ENCODE measurements at regions of chr19 and their contacts with region 1.

Region 1: DNA sequence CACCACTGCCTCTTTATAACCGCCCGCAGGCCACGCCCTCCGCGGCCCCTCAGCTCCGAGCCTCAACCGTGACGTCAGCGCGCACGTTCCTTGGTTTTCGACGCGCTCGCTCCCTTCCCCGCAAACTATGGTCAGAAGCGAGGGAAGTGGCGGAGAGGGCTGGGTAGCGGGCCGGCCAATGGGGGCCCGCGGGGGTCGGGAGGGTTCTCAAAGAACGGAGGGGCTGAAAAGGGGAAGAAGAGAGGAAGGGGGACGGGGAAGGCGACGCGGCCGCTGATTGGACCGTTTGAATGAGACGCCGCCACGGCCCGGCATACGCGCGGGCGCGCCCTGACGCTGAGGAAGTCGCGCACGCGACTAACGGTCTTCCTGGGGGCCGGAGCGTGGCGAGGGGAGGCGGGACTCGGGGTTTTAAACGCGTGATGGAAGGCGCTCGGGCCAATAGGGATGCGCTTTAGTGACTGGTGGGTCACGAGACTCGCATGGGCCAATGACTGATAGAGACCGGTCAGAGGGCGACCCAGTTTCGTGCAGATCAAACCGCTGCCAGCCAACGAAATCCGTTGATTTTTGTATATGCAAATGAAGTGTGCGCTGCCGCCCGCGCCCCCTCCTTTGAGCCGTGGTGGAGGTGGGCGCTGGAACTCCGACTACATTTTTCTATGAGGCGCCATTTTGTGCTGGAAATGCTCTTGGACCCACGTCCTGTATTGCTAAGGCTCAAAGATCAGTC is 378 bp upstream of the UBE2S start:
- DNase-seq: peak; percentile 96
- ATAC-seq: peak; percentile 93
- H3K4me3 Mint-ChIP-seq: peak overlapping the region; percentile 95
- H3K27ac Mint-ChIP-seq: peak overlapping the region; percentile 99
- H3K4me1 Mint-ChIP-seq: peaks cover 32% of the 10 kb centered on the region
- H3K27me3 Mint-ChIP-seq: no peaks in the 10 kb centered on the region

Region 2: GRCh38 chr19:55258828-55259539 is 149.0 kb before region 1 on chr19 and contains the start of gene PPP6R1:
- POLR2A ChIA-PET with region 1: interaction called, 43 read pairs
- DNase-seq: peak; percentile 98
- ATAC-seq: peak; percentile 77
- H3K4me3 Mint-ChIP-seq: peak within 1 kb of the TSS; percentile 99
- H3K27ac Mint-ChIP-seq: peak within 1 kb of the TSS; percentile 99
- H3K4me1 Mint-ChIP-seq: peaks cover 34% of the 10 kb centered on the region
- H3K27me3 Mint-ChIP-seq: no peaks in the 10 kb centered on the region
- total RNA-seq, gene PPP6R1: 211 to 226 TPM

Region 3: DNA sequence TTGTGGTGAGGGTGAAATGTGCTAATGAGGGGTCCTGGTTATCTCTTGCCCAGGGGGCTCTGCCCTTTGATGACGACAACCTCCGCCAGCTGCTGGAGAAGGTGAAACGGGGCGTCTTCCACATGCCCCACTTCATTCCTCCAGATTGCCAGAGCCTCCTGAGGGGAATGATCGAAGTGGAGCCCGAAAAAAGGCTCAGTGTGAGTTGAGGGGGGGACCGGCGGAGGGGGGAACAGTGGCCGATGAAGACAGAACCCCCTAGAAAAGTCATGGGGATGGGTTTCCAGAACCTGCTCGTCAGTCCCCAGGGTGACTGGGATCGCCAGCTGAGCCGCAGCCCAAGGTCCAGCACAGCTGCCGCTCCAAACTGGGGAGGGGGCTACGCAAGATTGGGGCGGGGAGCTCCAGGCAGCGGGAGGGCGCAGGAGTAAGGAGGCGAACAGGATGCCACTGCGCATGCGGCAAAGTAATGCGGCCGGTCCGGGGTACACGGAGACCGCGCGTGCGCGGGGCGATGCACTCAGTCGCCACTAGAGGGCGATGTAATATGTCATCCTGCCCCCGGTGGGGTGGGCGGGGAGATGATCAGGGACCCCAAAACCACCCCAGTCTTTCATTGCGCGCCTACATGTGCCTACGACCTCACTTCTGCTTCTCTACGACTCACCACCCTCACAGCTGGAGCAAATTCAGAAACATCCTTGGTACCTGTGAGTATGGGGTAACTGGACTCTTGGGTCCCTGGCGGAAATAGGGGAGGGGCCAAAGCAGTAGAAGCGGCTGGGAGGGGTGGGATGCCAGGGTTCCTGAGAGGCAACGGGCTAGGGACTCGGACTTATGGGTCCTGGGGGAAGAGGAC is 106.3 kb before region 1 on chr19:
- POLR2A ChIA-PET with region 1: interaction called, 15 read pairs
- DNase-seq: peak; percentile 98
- ATAC-seq: peak; percentile 91
- H3K4me3 Mint-ChIP-seq: peak overlapping the region; percentile 95
- H3K27ac Mint-ChIP-seq: peak overlapping the region; percentile 98
- H3K4me1 Mint-ChIP-seq: peaks cover 8% of the 10 kb centered on the region
- H3K27me3 Mint-ChIP-seq: peaks cover 3% of the 10 kb centered on the region

Region 4: GRCh38 chr19:55385740-55386529 is 22.0 kb before region 1 on chr19 and contains the start of gene RPL28:
- POLR2A ChIA-PET with region 1: interaction called, 211 read pairs
- DNase-seq: peak; percentile 96
- ATAC-seq: peak; percentile 74
- H3K4me3 Mint-ChIP-seq: peak within 1 kb of the TSS; percentile 100
- H3K27ac Mint-ChIP-seq: peak within 1 kb of the TSS; percentile 99
- H3K4me1 Mint-ChIP-seq: peaks cover 53% of the 10 kb centered on the region
- H3K27me3 Mint-ChIP-seq: no peaks in the 10 kb centered on the region
- total RNA-seq, gene RPL28: 3,030 to 3,043 TPM

Region 5: DNA sequence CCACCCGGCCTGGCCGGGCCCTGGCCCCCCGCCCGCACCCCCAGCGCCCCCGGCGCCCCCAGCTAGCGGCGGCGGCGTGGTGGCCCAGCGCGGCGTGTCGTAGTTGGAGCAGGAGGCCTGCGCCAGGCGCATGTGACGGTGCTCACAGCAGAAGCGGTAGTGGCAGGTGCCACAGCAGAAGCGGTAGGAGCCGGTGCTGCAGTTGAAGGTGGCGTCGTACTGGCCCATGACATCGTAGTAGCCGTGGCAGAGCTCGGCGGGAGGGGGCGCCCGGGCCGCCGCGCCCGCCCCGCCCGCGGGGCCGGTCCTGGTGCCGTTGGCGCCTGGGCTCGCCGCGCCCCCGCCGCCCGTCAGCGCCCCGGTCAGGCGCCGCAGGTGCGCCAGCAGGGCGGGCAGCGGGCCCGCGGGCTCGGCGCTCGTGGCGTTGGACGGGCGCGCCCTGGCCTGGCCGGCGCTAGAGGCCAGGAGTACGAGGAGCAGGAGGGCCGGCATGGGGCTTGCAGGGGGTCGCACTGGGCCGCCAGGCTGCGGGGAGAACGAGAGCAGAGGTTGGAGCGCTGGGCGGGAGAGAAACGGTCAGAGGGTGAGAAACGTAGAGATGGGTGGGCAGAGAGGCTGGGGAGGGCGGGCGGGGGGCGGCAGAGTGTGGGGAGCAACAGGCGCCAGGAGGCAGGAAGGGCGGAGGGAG is 34.5 kb after region 1 on chr19:
- POLR2A ChIA-PET with region 1: no interaction called
- DNase-seq: no peak
- ATAC-seq: no peak
- H3K4me3 Mint-ChIP-seq: no peak overlapping the region
- H3K27ac Mint-ChIP-seq: no peak overlapping the region
- H3K4me1 Mint-ChIP-seq: peaks cover 14% of the 10 kb centered on the region
- H3K27me3 Mint-ChIP-seq: peaks cover 62% of the 10 kb centered on the region

Region 6: GRCh38 chr19:55503502-55504251 is 95.7 kb after region 1 on chr19:
- POLR2A ChIA-PET with region 1: interaction called, 11 read pairs
- DNase-seq: peak; percentile 96
- ATAC-seq: peak; percentile 96
- H3K4me3 Mint-ChIP-seq: peak overlapping the region; percentile 73
- H3K27ac Mint-ChIP-seq: peak overlapping the region; percentile 77
- H3K4me1 Mint-ChIP-seq: peaks cover 15% of the 10 kb centered on the region
- H3K27me3 Mint-ChIP-seq: peaks cover 3% of the 10 kb centered on the region

Measured in activated naive CD8-positive, alpha-beta T cell treated with anti-CD3 and anti-CD28 coated beads, Interleukin-2, amount 10 ng/mL, durations not matched to agents 7 days and 5 days (primary cell).